ENCODE measurements at regions of chr11 and their contacts with region 1.

Region 1: GRCh38 chr11:75328426-75329277 is 22.8 kb downstream of the ARRB1 start:
- DNase-seq: peak in 8 of 9 experiments; percentile 48 to 79 (median 64)
- ATAC-seq: peak; percentile 93
- H3K4me3 ChIP-seq: no peak overlapping the region
- H3K4me3 Mint-ChIP-seq: peak overlapping the region; percentile 58
- H3K27ac ChIP-seq: peak overlapping the region; percentile 37 to 47
- H3K27ac Mint-ChIP-seq: peak overlapping the region; percentile 90
- H3K4me1 ChIP-seq: peaks cover 60% of the 10 kb centered on the region
- H3K4me1 Mint-ChIP-seq: peaks cover 69% of the 10 kb centered on the region
- H3K27me3 ChIP-seq: no peaks in the 10 kb centered on the region
- H3K27me3 Mint-ChIP-seq: no peaks in the 10 kb centered on the region
- CTCF ChIP-seq: no peak

Region 2: DNA sequence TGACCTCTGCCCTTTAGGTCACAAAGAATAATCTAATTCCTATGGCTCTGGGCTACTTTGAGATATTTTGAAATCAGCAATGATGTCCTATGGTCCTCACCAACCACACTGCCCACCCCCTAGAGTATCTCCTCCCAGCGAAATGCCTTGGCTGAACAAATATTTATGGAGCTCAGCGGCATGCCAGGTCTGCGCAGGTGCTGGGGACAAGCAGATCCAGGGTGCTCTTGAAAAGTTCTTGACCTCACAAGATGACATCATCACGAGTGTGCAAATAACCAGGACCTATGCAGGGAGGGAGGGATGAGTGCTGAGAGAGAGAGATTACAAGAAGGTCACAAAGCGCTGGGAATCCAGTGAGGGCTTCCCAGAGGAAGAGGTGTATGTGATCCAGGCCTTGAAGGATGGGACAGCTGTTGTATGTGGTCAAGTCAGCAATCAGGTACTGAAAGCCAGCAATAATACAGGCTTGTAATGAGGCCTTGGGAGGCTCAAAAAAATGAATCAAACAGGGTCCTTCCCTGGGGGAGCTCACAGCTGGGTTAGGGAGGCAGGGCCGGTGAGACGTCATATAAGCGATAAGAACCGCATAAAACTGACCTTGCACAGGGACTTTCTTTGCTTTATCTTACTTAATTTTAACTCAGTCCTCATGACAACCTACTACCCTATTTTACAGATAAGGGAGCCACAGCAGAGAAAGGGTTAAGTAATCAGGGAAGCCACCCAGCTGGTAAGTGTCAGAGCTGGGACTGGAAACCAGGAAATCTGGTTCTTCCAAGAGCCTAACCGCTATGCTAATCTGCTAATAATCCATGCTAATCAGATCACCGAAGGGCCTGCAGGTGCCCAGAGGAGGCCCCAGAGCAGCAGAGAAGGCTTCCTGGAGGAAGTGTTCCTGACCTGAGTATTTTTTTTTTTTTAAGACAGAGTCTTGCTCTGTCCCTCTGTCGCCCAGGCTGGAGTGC is 14.5 kb after region 1 on chr11:
- CTCF ChIA-PET with region 1: interaction called, 13 read pairs
- POLR2A ChIA-PET with region 1: interaction called, 22 read pairs
- intact Hi-C with region 1: no loop called
- DNase-seq: no peak
- ATAC-seq: no peak
- H3K4me3 ChIP-seq: no peak overlapping the region
- H3K4me3 Mint-ChIP-seq: no peak overlapping the region
- H3K27ac ChIP-seq: peak overlapping the region in 1 of 2 experiments; percentile 12
- H3K27ac Mint-ChIP-seq: peak overlapping the region; percentile 85
- H3K4me1 ChIP-seq: peaks cover 98% of the 10 kb centered on the region
- H3K4me1 Mint-ChIP-seq: peaks cover 97% of the 10 kb centered on the region
- H3K27me3 ChIP-seq: no peaks in the 10 kb centered on the region
- H3K27me3 Mint-ChIP-seq: no peaks in the 10 kb centered on the region
- CTCF ChIP-seq: no peak

Region 3: DNA sequence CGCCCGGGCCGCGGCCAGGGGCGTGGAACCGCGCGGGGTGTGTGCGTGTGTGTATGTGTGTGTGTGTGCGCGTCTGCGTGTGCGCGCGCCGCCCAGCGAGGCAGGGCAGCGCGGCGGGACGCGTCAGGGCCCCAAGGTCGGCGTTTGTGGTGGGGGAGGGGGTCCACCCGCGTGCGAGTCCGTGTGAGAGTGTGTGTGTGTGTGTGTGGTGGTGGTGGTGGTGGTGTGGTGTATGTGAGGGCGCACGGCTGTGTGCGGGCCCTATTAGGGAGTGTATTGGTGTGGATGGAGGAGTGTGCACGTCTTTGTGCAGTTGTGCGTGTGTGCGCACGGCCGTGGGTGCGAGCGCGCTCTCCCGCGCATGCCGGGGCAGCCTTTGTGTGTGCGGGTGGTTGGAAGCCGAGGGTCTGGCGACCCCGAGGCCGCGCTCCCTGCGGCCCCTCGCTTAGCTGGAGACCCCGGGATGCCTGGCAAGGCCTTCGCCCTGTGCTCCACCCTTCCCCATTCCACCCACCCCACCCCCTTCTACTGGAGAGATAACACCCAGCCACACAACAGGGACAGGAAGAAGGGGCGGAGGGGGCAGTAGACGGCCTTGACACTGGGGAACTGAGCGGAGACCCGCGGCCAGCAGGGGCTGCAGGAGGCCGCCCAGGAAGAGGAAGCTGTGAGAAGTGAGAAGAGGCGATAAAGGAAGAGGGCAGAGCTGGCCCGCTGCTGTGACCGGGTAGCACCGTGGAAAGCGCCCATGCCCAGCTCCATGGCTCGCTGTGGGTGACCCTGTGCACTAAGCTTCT is 23.3 kb after region 1 on chr11:
- CTCF ChIA-PET with region 1: interaction called, 13 read pairs
- POLR2A ChIA-PET with region 1: interaction called, 4 read pairs
- intact Hi-C with region 1: loop called (anchors 1 to 2 kb)
- DNase-seq: peak; percentile 30 to 83 (median 59)
- ATAC-seq: peak; percentile 67
- H3K4me3 ChIP-seq: peak overlapping the region; percentile 68 to 95
- H3K4me3 Mint-ChIP-seq: peak overlapping the region; percentile 93
- H3K27ac ChIP-seq: peak overlapping the region; percentile 63 to 74
- H3K27ac Mint-ChIP-seq: peak overlapping the region; percentile 89
- H3K4me1 ChIP-seq: peaks cover 60% of the 10 kb centered on the region
- H3K4me1 Mint-ChIP-seq: peaks cover 64% of the 10 kb centered on the region
- H3K27me3 ChIP-seq: no peaks in the 10 kb centered on the region
- H3K27me3 Mint-ChIP-seq: no peaks in the 10 kb centered on the region
- CTCF ChIP-seq: no peak

Measured in CD8-positive, alpha-beta T cell (primary cell).